ENCODE measurements at regions of chr4 and their contacts with region 1.

Region 1: DNA sequence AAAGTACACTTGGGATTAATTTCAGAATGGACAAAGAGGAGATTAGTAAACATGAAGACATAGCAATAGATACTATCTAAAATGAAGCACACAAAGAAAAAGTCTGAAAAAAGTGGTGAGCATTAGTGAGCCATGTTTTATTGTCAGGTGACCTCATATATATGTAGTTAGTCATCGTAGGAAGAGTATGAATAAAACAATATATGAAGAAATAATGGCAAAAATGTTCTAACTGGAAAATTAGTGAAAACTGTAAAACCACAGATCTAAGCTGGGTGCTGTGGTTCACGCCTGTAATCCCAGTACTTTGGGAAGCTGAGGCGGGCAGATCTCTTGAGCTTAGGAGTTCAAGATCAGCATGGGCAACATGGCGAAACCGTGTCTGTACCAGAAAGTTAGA is 67.9 kb downstream of the RBPJ start:
- DNase-seq: no peak
- H3K4me3 ChIP-seq: no peak overlapping the region
- H3K27ac ChIP-seq: no peak overlapping the region
- H3K4me1 ChIP-seq: no peaks in the 10 kb centered on the region
- CTCF ChIP-seq: no peak

Region 2: GRCh38 chr4:26404743-26405206 is 16.1 kb after region 1 on chr4:
- CTCF ChIA-PET with region 1: no interaction called
- POLR2A ChIA-PET with region 1: interaction called, 13 read pairs
- intact Hi-C with region 1: no loop called
- DNase-seq: no peak
- H3K4me3 ChIP-seq: no peak overlapping the region
- H3K27ac ChIP-seq: no peak overlapping the region
- H3K4me1 ChIP-seq: peaks cover 25% of the 10 kb centered on the region
- CTCF ChIP-seq: peak; percentile 37; the same call in 1 of the 2 replicates

Region 3: DNA sequence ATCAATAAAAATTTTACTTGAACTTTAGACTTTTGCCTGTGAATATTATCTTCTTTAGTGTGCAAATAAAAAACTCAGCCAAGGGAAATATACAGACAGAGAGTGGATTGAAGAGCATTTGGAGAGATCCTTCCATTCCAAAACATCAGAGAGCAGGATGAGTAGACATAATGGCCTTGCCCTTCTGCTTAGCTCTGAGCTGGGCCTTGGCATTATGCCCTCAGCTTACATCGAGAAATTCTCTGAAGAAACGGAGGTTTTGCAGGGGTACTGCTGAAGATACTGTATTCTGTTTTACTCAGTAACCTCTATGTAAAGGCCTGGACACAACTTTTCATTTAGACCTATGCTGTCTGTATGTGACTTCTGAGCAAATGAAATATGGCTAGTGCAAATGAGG is 789.4 kb after region 1 on chr4:
- CTCF ChIA-PET with region 1: no interaction called
- POLR2A ChIA-PET with region 1: no interaction called
- intact Hi-C with region 1: no loop called
- DNase-seq: no peak
- H3K4me3 ChIP-seq: no peak overlapping the region
- H3K27ac ChIP-seq: no peak overlapping the region
- H3K4me1 ChIP-seq: no peaks in the 10 kb centered on the region
- CTCF ChIP-seq: no peak